Activated CD4-positive, alpha-beta memory T cell treated with anti-CD3 and anti-CD28 coated beads for 36 hours (primary cell): ENCODE measurements at regions of chr6 and their contacts with region 1.

Region 1: DNA sequence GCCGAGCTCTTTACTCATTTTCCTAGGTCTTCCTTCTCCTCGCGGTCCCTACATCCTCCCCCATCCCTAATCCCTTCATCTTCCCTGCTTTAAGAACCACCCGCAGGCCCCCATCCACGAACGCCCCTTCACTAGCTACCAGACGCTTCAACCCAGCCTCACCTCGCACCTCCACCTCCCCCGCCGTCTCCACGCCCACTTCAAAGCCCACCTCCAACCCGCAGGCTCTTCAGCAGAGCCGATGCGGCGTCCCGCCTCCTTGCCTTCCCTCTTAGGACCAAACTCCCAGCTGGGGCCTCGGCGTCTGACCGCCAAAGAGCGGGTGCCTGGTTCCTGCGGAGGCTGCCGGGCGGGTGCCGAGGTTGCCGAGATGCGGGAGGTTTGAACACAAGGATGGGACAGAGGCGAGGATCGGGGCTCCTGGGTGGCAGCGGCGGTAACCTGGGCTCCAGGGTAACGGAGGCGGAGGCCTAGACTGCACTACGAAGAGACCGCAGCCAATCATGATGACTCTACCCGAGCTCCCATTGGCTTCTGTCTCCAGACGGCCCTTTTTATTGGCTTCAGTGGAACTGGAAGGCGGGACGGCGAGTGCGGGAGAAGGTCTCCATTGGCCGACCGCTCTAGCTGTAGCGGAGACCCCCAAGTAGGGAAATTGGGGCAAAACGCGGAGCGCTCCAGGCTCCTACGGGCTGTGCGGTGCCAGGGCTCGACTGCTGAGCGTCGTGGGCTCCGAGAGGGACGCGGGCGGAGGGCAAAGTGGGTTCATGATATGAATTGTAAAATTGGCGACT is at the start of gene LCA5:
- DNase-seq: peak; percentile 87
- H3K4me3 Mint-ChIP-seq: no peak within 1 kb of the TSS
- H3K27ac Mint-ChIP-seq: no peak within 1 kb of the TSS
- H3K4me1 Mint-ChIP-seq: no peaks in the 10 kb centered on the region
- H3K27me3 Mint-ChIP-seq: peaks cover 24% of the 10 kb centered on the region
- total RNA-seq, gene LCA5: 0.15 to 0.21 TPM

Region 2: DNA sequence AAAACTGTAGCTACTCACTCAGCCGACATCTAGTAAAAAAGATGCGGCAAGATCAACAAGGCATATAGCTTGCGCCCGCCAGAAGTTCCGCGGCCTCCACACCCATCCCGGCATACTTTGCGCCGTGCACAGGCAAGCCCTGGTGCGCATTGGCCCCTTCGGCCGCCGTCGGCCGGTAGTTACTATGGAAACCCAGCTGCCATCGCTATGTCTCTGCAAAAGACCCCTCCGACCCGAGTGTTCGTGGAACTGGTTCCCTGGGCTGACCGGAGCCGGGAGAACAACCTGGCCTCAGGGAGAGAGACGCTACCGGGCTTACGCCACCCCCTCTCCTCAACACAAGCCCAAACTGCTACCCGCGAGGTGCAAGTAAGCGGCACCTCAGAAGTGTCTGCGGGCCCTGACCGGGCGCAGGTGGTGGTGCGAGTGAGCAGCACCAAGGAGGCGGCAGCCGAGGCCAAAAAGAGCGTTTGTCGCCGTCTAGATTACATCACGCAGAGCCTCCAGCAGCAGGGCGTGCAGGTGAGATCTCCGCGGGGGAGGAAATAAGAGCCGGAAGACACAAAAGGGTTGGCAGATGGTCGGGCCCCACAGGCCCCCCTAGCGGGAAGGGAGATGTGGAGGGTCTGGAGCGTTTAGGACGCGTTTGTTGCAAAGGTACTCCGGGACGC is 669.6 kb before region 1 on chr6 and contains the start of gene IRAK1BP1:
- CTCF ChIA-PET with region 1: no interaction called
- POLR2A ChIA-PET with region 1: no interaction called
- intact Hi-C with region 1: loop called (anchors 5 kb)
- DNase-seq: peak; percentile 90
- H3K4me3 Mint-ChIP-seq: peak within 1 kb of the TSS; percentile 97
- H3K27ac Mint-ChIP-seq: peak within 1 kb of the TSS; percentile 86
- H3K4me1 Mint-ChIP-seq: peaks cover 21% of the 10 kb centered on the region
- H3K27me3 Mint-ChIP-seq: no peaks in the 10 kb centered on the region
- total RNA-seq, gene IRAK1BP1: 2.1 to 2.4 TPM

Region 3: GRCh38 chr6:79861023-79861422 is 323.9 kb after region 1 on chr6:
- CTCF ChIA-PET with region 1: no interaction called
- POLR2A ChIA-PET with region 1: no interaction called
- intact Hi-C with region 1: no loop called
- DNase-seq: no peak
- H3K4me3 Mint-ChIP-seq: no peak overlapping the region
- H3K27ac Mint-ChIP-seq: no peak overlapping the region
- H3K4me1 Mint-ChIP-seq: no peaks in the 10 kb centered on the region
- H3K27me3 Mint-ChIP-seq: peaks cover 2% of the 10 kb centered on the region